CD14-positive monocyte (primary cell): ENCODE measurements at regions of chr17 and their contacts with region 1.

Region 1: GRCh38 chr17:71849783-71850768 is 270.7 kb upstream of the SOX9 start:
- DNase-seq: no peak
- H3K4me3 ChIP-seq: no peak overlapping the region
- H3K4me3 Mint-ChIP-seq: no peak overlapping the region
- H3K27ac ChIP-seq: no peak overlapping the region
- H3K27ac Mint-ChIP-seq: no peak overlapping the region
- H3K4me1 ChIP-seq: no peaks in the 10 kb centered on the region
- H3K4me1 Mint-ChIP-seq: no peaks in the 10 kb centered on the region
- H3K27me3 ChIP-seq: no peaks in the 10 kb centered on the region
- H3K27me3 Mint-ChIP-seq: peaks cover 0 to 1% (median 0%) of the 10 kb centered on the region in 3 donors
- CTCF ChIP-seq: no peak

Region 2: DNA sequence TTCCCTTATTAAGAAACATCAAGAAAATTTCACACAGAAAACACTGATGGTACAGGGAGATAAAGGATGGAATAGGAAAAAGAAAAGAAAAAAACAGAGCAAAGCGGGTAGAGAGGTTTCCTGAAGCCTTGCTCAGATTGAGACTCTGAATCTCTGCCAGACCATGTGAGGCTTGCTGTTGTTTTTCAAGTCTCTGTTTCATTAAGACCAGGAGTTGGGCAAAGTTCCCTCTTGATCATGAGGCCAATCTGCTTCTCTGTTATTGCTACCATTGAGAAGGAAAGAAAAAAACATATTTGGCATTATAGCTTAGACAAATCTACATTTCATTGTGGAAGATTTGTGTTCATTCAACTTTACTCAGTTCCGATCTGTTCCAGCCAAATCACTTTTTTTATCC is 69.1 kb after region 1 on chr17:
- intact Hi-C with region 1: loop called in 1 of 2 experiments (anchors 10 kb)
- DNase-seq: no peak
- H3K4me3 ChIP-seq: no peak overlapping the region
- H3K4me3 Mint-ChIP-seq: no peak overlapping the region
- H3K27ac ChIP-seq: no peak overlapping the region
- H3K27ac Mint-ChIP-seq: no peak overlapping the region
- H3K4me1 ChIP-seq: no peaks in the 10 kb centered on the region
- H3K4me1 Mint-ChIP-seq: no peaks in the 10 kb centered on the region
- H3K27me3 ChIP-seq: no peaks in the 10 kb centered on the region
- H3K27me3 Mint-ChIP-seq: peaks cover 0 to 3% (median 0%) of the 10 kb centered on the region in 3 donors
- CTCF ChIP-seq: no peak